ENCODE measurements at regions of chr2 and their contacts with region 1.

Region 1: DNA sequence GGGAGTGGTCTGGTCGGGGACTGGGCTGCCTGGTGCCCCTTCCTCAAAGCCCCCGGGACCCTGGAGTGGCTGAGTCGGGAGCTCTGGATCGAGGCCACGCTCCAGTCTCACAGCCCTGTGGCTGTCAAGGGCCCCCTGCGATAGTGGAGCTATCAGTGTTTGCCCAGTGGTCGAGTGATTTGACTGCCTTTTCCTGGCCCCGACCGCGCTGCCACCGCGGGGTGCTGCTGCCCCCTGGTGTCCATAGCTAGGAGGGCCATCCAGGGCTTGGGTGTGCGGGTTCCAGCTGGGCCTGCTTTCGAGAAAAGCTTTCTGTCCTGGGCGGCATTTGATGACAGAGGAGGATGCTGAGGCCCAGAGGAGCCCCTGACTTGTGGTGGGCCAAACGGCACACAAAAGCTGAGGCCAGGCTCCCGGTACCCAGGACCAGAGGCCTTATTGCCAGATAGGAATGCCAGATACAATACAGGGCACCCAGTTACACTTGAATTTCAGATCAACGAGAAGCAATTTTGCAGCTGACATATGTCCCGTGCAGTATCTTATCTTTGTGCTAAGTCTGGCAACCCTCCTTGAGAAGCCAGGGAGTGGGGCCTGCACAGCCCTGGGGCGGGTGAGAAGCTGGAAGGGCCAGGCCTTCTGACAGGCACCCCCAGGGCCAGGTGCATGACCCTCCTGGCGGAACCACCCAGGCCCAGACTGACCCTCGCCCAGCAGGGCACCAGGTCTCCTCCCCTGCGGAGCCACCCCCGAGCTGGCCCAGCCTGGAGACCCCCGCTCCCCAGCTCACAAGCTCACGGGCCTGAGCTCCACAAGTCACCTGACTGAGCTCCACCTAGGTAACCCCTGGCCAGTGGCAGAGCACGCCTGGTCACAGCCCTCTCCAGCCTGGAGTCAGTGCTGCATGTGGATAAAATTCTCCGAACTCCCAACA is 13.0 kb downstream of the ODC1 start:
- DNase-seq: peak; percentile 84 to 92
- H3K4me3 ChIP-seq: no peak overlapping the region
- H3K4me3 Mint-ChIP-seq: no peak overlapping the region
- H3K27ac Mint-ChIP-seq: peak overlapping the region; percentile 19
- H3K4me1 ChIP-seq: peaks cover 18% of the 10 kb centered on the region
- H3K4me1 Mint-ChIP-seq: peaks cover 8% of the 10 kb centered on the region
- H3K27me3 ChIP-seq: no peaks in the 10 kb centered on the region
- H3K27me3 Mint-ChIP-seq: no peaks in the 10 kb centered on the region
- CTCF ChIP-seq: peak; percentile 97 to 98

Region 2: GRCh38 chr2:9813312-9814133 is 621.6 kb before region 1 on chr2:
- CTCF ChIA-PET with region 1: no interaction called
- POLR2A ChIA-PET with region 1: no interaction called
- intact Hi-C with region 1: loop called (anchors 10 kb)
- DNase-seq: peak; percentile 66 to 81
- H3K4me3 ChIP-seq: 0 out of 2 replicates have a peak overlapping the region, but pooled peaks have one; percentile 21
- H3K4me3 Mint-ChIP-seq: peak overlapping the region; percentile 28
- H3K27ac Mint-ChIP-seq: no peak overlapping the region
- H3K4me1 ChIP-seq: no peaks in the 10 kb centered on the region
- H3K4me1 Mint-ChIP-seq: no peaks in the 10 kb centered on the region
- H3K27me3 ChIP-seq: no peaks in the 10 kb centered on the region
- H3K27me3 Mint-ChIP-seq: no peaks in the 10 kb centered on the region
- CTCF ChIP-seq: peak; percentile 95 to 96

Region 3: GRCh38 chr2:10122386-10123280 is 312.5 kb before region 1 on chr2 and contains the start of gene RRM2:
- CTCF ChIA-PET with region 1: interaction called, 54 read pairs
- POLR2A ChIA-PET with region 1: interaction called, 3 read pairs
- intact Hi-C with region 1: loop called (anchors 1 kb)
- DNase-seq: peak; percentile 98
- H3K4me3 ChIP-seq: peak within 1 kb of the TSS; percentile 66
- H3K4me3 Mint-ChIP-seq: peak within 1 kb of the TSS; percentile 96
- H3K27ac Mint-ChIP-seq: peak within 1 kb of the TSS; percentile 96
- H3K4me1 ChIP-seq: peaks cover 11% of the 10 kb centered on the region
- H3K4me1 Mint-ChIP-seq: peaks cover 13% of the 10 kb centered on the region
- H3K27me3 ChIP-seq: no peaks in the 10 kb centered on the region
- H3K27me3 Mint-ChIP-seq: no peaks in the 10 kb centered on the region
- CTCF ChIP-seq: no peak
- total RNA-seq, gene RRM2: 160 and 169 TPM in 2 replicates

Region 4: GRCh38 chr2:10188216-10188615 is 246.9 kb before region 1 on chr2:
- CTCF ChIA-PET with region 1: interaction called, 3 read pairs
- POLR2A ChIA-PET with region 1: no interaction called
- intact Hi-C with region 1: loop called (anchors 1 kb)
- DNase-seq: peak in 1 of 2 experiments; percentile 61
- H3K4me3 ChIP-seq: no peak overlapping the region
- H3K4me3 Mint-ChIP-seq: no peak overlapping the region
- H3K27ac Mint-ChIP-seq: no peak overlapping the region
- H3K4me1 ChIP-seq: no peaks in the 10 kb centered on the region
- H3K4me1 Mint-ChIP-seq: no peaks in the 10 kb centered on the region
- H3K27me3 ChIP-seq: no peaks in the 10 kb centered on the region
- H3K27me3 Mint-ChIP-seq: no peaks in the 10 kb centered on the region
- CTCF ChIP-seq: peak; percentile 54 to 88

Region 5: DNA sequence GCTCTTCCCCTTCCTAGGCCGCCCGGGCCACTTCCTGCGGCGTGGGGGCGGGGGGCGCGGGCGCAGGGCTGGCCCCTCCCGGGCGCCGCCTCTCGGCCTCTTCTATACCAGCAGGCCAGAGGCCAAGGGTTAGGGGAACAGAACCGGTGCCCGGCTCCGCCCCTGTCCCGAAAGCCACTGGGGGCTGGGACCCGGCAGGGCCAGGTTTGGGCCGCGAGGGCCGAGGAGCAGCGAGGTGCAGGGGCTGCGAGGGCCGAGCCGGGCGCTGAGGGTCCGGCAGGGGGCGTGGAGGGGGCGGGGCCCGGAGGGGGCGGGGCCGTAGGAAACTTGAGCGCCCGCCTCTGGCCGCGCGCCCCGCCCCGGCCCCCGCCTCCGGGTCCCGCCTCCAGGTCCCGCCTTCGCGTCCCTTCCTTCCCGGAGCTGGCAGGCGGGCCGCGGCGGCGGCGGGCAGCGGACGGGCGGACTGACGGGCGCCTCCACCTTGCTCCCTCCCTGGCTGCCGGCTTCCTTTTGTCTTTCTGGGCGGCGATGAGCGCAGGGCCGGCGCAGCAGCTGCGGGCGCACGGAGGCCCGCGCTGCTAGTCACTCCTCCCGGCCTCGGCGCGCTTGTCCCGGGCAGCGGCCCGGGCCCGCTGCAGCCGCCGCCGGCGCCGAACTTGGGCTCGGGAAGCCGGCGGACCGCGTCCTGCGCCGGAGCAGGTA is 132.5 kb before region 1 on chr2 and contains the start of gene HPCAL1:
- CTCF ChIA-PET with region 1: interaction called, 16 read pairs
- POLR2A ChIA-PET with region 1: no interaction called
- intact Hi-C with region 1: loop called (anchors 1 kb)
- DNase-seq: peak; percentile 96 to 98
- H3K4me3 ChIP-seq: peak within 1 kb of the TSS; percentile 99
- H3K4me3 Mint-ChIP-seq: peak within 1 kb of the TSS; percentile 94
- H3K27ac Mint-ChIP-seq: peak within 1 kb of the TSS; percentile 60
- H3K4me1 ChIP-seq: peaks cover 23% of the 10 kb centered on the region
- H3K4me1 Mint-ChIP-seq: peaks cover 20% of the 10 kb centered on the region
- H3K27me3 ChIP-seq: no peaks in the 10 kb centered on the region
- H3K27me3 Mint-ChIP-seq: no peaks in the 10 kb centered on the region
- CTCF ChIP-seq: peak; percentile 66 to 83
- total RNA-seq, gene HPCAL1: 26.3 and 26.9 TPM in 2 replicates

Region 6: DNA sequence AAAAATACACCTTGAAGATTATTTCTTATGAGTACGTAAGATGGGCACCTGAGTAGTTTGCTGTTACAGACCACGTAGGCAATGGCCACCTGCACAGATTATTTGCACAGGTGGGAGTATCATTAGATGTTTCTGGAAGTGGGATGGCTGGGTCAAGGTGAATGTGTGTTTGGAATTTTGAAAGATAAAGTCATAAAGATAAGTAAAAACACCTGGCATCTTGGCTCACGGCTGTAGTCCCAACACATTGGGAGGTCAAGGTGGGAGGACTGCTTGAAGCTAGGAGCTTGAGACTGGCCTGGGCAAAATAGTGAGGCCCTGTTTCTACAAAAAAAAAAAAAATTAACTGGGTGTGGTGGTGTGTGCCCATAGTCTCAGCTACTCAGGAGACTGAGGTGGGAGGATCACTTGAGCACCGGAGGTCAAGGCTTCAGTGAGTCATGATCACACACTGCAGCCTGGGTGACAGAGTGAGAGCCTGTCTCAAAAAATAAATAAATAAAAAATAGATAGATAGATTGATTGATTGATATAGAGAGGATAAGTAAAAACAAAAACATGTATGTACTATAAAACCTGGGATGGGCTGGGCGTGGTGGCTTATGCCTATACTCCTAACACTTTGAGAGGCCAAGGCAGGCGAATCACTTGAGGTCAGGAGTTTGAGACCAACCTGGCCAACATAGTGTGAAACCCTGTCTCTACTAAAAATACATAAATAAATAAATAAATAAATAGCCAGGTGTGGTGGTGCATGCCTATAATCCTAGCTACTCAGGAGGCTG is 17.4 kb before region 1 on chr2:
- CTCF ChIA-PET with region 1: interaction called, 10 read pairs
- POLR2A ChIA-PET with region 1: no interaction called
- intact Hi-C with region 1: no loop called
- DNase-seq: peak; percentile 62 to 76
- H3K4me3 ChIP-seq: no peak overlapping the region
- H3K4me3 Mint-ChIP-seq: no peak overlapping the region
- H3K27ac Mint-ChIP-seq: peak overlapping the region; percentile 31
- H3K4me1 ChIP-seq: peaks cover 14% of the 10 kb centered on the region
- H3K4me1 Mint-ChIP-seq: peaks cover 14% of the 10 kb centered on the region
- H3K27me3 ChIP-seq: no peaks in the 10 kb centered on the region
- H3K27me3 Mint-ChIP-seq: no peaks in the 10 kb centered on the region
- CTCF ChIP-seq: no peak

Measured in Caco-2 (cell line).